Calu3 (cell line): ENCODE measurements at regions of chr17 and their contacts with region 1.

Region 1: GRCh38 chr17:28717578-28718333 is at the start of gene RAB34:
- DNase-seq: peak; percentile 70
- H3K4me3 Mint-ChIP-seq: peak within 1 kb of the TSS; percentile 89
- H3K27ac Mint-ChIP-seq: peak within 1 kb of the TSS; percentile 53
- H3K4me1 Mint-ChIP-seq: peaks cover 18% of the 10 kb centered on the region
- H3K27me3 Mint-ChIP-seq: no peaks in the 10 kb centered on the region
- CTCF ChIP-seq: no peak
- total RNA-seq, gene RAB34: 34.5 and 35.3 TPM in 2 replicates

Region 2: DNA sequence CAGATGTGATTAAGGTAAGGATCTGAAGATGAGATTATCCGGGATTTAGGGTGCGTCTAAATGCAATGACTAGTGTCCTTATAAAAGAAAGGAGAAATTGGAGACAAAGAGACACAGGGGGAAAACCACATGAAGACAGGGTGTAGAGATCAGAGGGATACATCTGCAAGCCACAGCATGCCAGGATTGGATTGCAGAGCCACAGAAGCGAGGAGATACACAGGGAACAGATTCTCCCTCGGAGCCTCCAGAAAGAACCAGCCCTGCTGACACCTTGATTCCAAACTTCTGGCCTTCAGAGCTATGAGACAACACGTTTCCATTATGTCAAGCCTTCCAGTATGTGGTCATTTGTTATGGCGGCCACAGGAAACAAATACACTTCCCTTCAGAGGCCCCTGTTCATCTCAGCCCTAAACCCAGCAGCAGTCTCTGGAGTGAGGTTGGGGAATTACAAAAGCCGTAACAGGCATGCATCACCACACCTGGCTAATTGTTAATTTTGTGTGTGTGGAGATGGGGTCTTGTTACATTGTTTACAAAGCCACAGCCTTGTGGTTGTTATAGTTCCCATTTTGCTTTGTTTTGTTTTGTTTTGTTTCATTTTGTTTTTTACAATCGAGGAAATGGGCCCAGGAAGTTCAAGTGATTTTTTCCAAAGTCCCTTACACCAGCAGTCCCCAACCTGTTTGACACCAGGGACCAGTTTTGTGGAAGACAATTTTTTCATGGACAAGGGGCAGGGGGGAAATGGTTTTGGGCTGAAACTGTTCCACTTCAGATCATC is 773.0 kb before region 1 on chr17:
- CTCF ChIA-PET with region 1: no interaction called
- intact Hi-C with region 1: no loop called
- DNase-seq: no peak
- H3K4me3 Mint-ChIP-seq: no peak overlapping the region
- H3K27ac Mint-ChIP-seq: no peak overlapping the region
- H3K4me1 Mint-ChIP-seq: no peaks in the 10 kb centered on the region
- H3K27me3 Mint-ChIP-seq: peaks cover 68% of the 10 kb centered on the region
- CTCF ChIP-seq: no peak

Region 3: GRCh38 chr17:28661635-28662537 is 55.9 kb before region 1 on chr17 and contains the starts of genes SDF2 and SUPT6H:
- CTCF ChIA-PET with region 1: no interaction called
- intact Hi-C with region 1: loop called (anchors 5 kb)
- DNase-seq: peak; percentile 92
- H3K4me3 Mint-ChIP-seq: peak within 1 kb of the TSS; percentile 94
- H3K27ac Mint-ChIP-seq: peak within 1 kb of the TSS; percentile 96
- H3K4me1 Mint-ChIP-seq: peaks cover 40% of the 10 kb centered on the region
- H3K27me3 Mint-ChIP-seq: no peaks in the 10 kb centered on the region
- CTCF ChIP-seq: no peak
- total RNA-seq, gene SDF2: 58.0 and 75.1 TPM in 2 replicates
- total RNA-seq, gene SUPT6H: 107 and 110 TPM in 2 replicates

Region 4: DNA sequence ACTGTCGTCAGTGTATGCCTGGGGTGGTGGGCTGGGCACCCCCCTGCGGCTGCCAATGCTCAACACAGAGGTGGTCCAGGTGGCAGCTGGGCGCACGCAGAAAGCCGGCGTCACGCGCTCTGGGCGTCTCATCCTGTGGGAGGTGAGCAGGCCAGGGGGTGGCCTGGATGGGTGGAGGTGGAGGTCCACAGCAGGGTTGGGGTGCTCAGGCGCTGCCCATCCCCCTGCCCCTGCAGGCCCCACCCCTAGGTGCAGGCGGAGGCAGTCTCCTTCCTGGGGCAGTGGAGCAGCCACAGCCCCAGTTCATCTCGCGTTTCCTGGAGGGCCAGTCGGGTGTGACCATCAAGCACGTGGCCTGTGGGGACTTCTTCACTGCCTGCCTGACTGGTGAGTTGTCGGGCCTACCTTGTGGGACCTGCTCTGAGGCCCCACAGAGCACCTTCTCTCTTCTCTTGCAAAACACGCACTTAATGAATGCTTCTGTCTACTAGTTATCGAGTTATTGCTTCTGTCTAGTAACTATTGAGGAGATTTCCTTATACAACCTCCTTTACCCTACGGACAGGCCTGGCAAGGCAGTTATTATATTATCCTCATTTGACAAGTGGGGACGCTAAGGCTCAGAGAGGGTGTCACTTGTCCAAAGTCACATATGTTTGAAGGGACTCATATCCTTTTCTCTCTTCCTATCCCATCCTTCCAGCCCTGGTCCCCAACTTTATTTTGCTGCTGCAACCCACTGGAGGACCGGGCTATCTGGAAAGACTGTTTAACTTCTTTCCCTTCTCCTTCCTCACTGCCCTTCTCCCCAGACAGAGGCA is 20.3 kb after region 1 on chr17:
- CTCF ChIA-PET with region 1: no interaction called
- intact Hi-C with region 1: no loop called
- DNase-seq: no peak
- H3K4me3 Mint-ChIP-seq: no peak overlapping the region
- H3K27ac Mint-ChIP-seq: no peak overlapping the region
- H3K4me1 Mint-ChIP-seq: peaks cover 23% of the 10 kb centered on the region
- H3K27me3 Mint-ChIP-seq: no peaks in the 10 kb centered on the region
- CTCF ChIP-seq: no peak

Region 5: DNA sequence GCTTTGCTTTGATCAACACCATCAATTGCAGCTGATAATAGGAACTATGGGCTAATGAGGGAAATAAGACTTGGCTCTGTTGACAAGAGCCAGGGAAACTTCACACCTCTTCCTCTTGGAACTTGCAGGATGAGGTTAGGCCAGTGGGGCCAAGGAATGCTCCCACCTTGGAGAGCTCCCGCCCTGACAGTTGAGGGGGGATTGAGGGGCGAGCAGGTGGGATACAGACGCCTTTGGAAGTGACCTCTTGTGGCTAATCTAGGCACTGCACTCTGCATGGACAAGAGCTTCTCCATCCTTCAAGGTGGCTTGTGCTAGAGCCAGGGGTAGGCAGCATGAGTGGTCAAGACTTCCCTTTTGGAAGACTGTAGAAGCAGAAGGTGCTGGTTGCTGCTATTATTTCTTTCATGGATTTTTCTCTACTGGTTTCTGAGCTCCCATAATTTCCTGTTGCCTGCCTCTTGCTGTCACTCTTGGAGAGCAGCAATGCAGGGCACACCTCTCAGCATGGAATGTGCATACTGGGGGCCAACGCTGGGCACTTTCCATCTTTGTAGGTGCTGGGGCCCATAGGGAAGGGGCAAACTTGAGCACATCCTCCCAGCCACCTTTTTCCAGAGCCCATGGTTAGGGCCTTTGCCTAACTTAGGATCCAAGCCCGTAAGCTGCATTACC is 235.8 kb after region 1 on chr17:
- CTCF ChIA-PET with region 1: no interaction called
- intact Hi-C with region 1: loop called (anchors 5 kb)
- DNase-seq: peak; percentile 56
- H3K4me3 Mint-ChIP-seq: no peak overlapping the region
- H3K27ac Mint-ChIP-seq: no peak overlapping the region
- H3K4me1 Mint-ChIP-seq: no peaks in the 10 kb centered on the region
- H3K27me3 Mint-ChIP-seq: no peaks in the 10 kb centered on the region
- CTCF ChIP-seq: peak; percentile 90